ENCODE measurements at regions of chr3 and their contacts with region 1.

Region 1: GRCh38 chr3:58188173-58188564 is 22.6 kb downstream of the DNASE1L3 start:
- H3K4me3 Mint-ChIP-seq: no peak overlapping the region
- H3K27ac Mint-ChIP-seq: peak overlapping the region; percentile 67
- H3K4me1 Mint-ChIP-seq: peaks cover 50% of the 10 kb centered on the region
- H3K27me3 Mint-ChIP-seq: no peaks in the 10 kb centered on the region

Region 2: GRCh38 chr3:58217209-58217811 is 29.1 kb after region 1 on chr3:
- intact Hi-C with region 1: loop called (anchors 1 kb)
- H3K4me3 Mint-ChIP-seq: peak overlapping the region; percentile 34
- H3K27ac Mint-ChIP-seq: peak overlapping the region; percentile 51
- H3K4me1 Mint-ChIP-seq: peaks cover 55% of the 10 kb centered on the region
- H3K27me3 Mint-ChIP-seq: no peaks in the 10 kb centered on the region

Region 3: DNA sequence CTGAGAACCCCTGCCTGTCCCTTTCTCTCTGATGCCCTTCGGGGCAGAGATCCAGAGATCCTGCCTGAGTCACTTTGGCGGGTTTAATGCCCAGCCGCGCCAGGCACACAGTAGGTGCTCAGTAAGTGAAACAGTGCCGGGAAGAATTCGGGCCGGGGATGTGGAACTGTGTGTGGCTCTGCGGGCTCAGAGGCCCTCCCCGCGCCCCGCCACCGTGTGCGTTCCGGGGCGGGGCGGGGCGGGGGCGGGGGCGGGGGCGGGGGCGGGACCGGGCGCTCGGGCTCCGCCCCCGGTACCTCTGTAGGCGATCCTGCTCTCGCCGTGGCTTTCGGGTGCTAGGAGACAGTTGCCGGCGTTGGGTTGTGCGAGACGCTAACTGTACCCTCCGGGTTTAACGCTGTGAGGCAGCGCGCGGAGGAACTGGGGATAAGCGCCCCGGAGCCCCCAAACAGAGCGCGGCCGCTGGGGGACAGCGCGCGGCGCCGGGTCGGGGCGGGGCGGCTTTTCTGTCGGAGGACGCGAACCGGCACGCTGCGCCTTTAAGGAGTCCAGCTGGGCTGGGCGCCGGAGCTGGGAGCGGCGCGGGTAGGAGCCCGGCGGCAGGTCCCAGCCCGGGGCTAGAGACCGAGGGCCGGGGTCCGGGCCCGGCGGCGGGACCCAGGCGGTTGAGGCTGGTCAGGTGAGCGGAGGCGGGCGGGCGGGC is 49.2 kb after region 1 on chr3 and contains the start of gene ABHD6:
- intact Hi-C with region 1: loop called (anchors 5 kb)
- H3K4me3 Mint-ChIP-seq: peak within 1 kb of the TSS; percentile 95
- H3K27ac Mint-ChIP-seq: peak within 1 kb of the TSS; percentile 78
- H3K4me1 Mint-ChIP-seq: peaks cover 53% of the 10 kb centered on the region
- H3K27me3 Mint-ChIP-seq: peaks cover 11% of the 10 kb centered on the region

Region 4: GRCh38 chr3:58299839-58300516 is 111.8 kb after region 1 on chr3:
- intact Hi-C with region 1: loop called (anchors 1 kb)
- H3K4me3 Mint-ChIP-seq: no peak overlapping the region
- H3K27ac Mint-ChIP-seq: no peak overlapping the region
- H3K4me1 Mint-ChIP-seq: no peaks in the 10 kb centered on the region
- H3K27me3 Mint-ChIP-seq: peaks cover 20% of the 10 kb centered on the region